Activated CD4-positive, alpha-beta memory T cell treated with anti-CD3 and anti-CD28 coated beads for 36 hours (primary cell): ENCODE measurements at regions of chr6 and their contacts with region 1.

Region 1: DNA sequence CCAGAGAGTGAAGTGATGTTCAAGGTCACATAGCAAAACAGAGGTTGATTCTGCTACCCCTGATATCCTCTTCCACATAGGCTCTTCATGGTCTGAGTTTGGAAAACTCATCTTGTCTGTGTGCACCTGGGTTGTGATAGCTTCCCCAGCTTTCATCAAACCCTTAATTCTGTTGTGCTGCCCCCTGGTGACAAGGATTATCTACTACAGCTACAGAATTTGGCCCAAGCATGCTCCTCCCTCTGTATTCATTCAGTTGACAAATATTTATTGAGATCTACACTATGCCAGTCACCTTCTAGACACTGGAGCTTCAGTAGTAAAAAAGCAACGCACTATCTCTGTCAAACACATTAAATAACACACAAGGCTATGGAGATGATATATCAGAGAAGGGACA is 50.4 kb downstream of the SMPDL3A start:
- DNase-seq: peak; percentile 50
- H3K4me3 Mint-ChIP-seq: no peak overlapping the region
- H3K27ac Mint-ChIP-seq: no peak overlapping the region
- H3K4me1 Mint-ChIP-seq: no peaks in the 10 kb centered on the region
- H3K27me3 Mint-ChIP-seq: peaks cover 5% of the 10 kb centered on the region

Region 2: DNA sequence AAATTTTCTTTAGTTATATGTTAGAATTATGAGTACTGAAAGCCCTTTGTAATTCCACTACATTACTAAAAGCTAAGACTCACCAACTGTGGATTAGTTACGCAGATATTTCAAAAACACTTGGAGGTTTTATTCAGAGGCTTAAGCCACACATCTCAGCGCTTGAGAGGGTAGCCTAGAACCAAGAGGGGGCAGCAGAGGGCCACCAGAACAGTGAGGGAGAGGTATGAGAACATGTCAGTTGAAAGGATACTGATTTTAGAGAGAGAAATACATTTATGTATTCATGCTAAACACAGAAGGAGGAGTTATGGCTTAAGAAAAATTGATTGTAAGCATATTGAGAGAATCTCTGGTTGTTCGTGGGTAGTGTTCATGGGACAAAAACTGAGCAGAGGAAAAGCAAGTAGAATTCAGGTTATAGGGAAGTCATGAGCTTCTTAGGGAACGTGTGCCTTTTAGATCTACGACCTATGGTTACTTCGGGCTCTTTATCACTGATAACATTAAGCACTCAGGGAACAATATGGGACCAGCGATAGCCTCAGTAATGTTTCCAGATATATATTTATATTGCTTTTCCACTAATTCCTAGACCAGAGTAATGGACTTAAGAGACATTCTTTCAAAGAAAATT is 347.4 kb before region 1 on chr6:
- CTCF ChIA-PET with region 1: interaction called, 26 read pairs
- POLR2A ChIA-PET with region 1: no interaction called
- intact Hi-C with region 1: loop called (anchors 1 kb)
- DNase-seq: peak; percentile 78
- H3K4me3 Mint-ChIP-seq: no peak overlapping the region
- H3K27ac Mint-ChIP-seq: no peak overlapping the region
- H3K4me1 Mint-ChIP-seq: peaks cover 5% of the 10 kb centered on the region
- H3K27me3 Mint-ChIP-seq: peaks cover 8% of the 10 kb centered on the region

Region 3: DNA sequence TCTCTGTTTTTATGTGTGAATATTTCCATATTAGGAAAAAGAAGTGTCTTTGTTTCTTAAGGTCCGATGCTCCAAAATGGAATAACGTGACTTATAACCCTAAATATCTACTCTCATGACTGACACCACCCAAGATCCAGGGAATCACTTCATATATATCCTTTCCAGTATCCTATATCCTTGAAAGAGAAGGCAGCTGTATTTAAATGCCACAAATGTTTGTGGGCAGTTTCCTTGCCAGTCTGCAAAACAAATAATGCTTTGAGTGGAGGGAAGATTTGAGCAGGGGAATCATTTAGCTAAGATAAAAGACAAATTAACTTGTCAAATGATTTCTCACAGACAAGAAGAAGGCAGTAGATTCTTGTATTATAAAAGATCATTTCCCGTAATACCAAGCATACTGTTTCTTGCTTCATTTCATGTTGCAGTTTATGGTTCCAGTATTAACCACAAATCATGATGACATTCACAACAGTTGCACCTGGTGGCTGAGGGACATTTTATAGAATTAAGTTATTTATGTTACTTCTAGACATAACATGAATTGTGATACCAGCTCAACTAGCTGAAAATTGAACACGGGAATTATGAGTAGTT is 89.9 kb before region 1 on chr6:
- CTCF ChIA-PET with region 1: interaction called, 15 read pairs
- POLR2A ChIA-PET with region 1: no interaction called
- intact Hi-C with region 1: no loop called
- DNase-seq: no peak
- H3K4me3 Mint-ChIP-seq: no peak overlapping the region
- H3K27ac Mint-ChIP-seq: no peak overlapping the region
- H3K4me1 Mint-ChIP-seq: peaks cover 8% of the 10 kb centered on the region
- H3K27me3 Mint-ChIP-seq: no peaks in the 10 kb centered on the region

Region 4: GRCh38 chr6:123053602-123054225 is 214.2 kb after region 1 on chr6:
- CTCF ChIA-PET with region 1: no interaction called
- POLR2A ChIA-PET with region 1: no interaction called
- intact Hi-C with region 1: no loop called
- DNase-seq: no peak
- H3K4me3 Mint-ChIP-seq: no peak overlapping the region
- H3K27ac Mint-ChIP-seq: no peak overlapping the region
- H3K4me1 Mint-ChIP-seq: no peaks in the 10 kb centered on the region
- H3K27me3 Mint-ChIP-seq: no peaks in the 10 kb centered on the region